Motor neuron (in vitro differentiated cells): ENCODE measurements at regions of chr5 and their contacts with region 1.

Region 1: GRCh38 chr5:74651710-74652109 is 11.2 kb upstream of the ENC1 start:
- ATAC-seq: peak in 3 of 8 experiments; percentile 22 to 54 (median 51)
- H3K4me3 ChIP-seq: no peak overlapping the region
- H3K27ac ChIP-seq: no peak overlapping the region
- H3K4me1 ChIP-seq: peaks cover 2 to 8% of the 10 kb centered on the region in 2 donors

Region 2: GRCh38 chr5:73902327-73903051 is 749.2 kb before region 1 on chr5:
- in situ Hi-C with region 1: loop called in 8 of 9 experiments (anchors 5 to 10 kb)
- ATAC-seq: peak in 5 of 8 experiments; percentile 23 to 55 (median 30)
- H3K4me3 ChIP-seq: no peak overlapping the region
- H3K27ac ChIP-seq: no peak overlapping the region
- H3K4me1 ChIP-seq: no peaks in the 10 kb centered on the region

Region 3: GRCh38 chr5:74122979-74123590 is 528.6 kb before region 1 on chr5:
- in situ Hi-C with region 1: no loop called
- ATAC-seq: no peak
- H3K4me3 ChIP-seq: no peak overlapping the region
- H3K27ac ChIP-seq: no peak overlapping the region
- H3K4me1 ChIP-seq: peaks cover 13 to 26% of the 10 kb centered on the region in 2 donors